Mammary epithelial cell (primary cell): ENCODE measurements at regions of chr14 and their contacts with region 1.

Region 1: GRCh38 chr14:103444837-103445524 is 59.8 kb downstream of the MARK3 start:
- DNase-seq: no peak
- H3K4me3 ChIP-seq: no peak overlapping the region
- H3K27ac ChIP-seq: no peak overlapping the region
- H3K4me1 ChIP-seq: no peaks in the 10 kb centered on the region
- H3K27me3 ChIP-seq: no peaks in the 10 kb centered on the region
- CTCF ChIP-seq: no peak

Region 2: DNA sequence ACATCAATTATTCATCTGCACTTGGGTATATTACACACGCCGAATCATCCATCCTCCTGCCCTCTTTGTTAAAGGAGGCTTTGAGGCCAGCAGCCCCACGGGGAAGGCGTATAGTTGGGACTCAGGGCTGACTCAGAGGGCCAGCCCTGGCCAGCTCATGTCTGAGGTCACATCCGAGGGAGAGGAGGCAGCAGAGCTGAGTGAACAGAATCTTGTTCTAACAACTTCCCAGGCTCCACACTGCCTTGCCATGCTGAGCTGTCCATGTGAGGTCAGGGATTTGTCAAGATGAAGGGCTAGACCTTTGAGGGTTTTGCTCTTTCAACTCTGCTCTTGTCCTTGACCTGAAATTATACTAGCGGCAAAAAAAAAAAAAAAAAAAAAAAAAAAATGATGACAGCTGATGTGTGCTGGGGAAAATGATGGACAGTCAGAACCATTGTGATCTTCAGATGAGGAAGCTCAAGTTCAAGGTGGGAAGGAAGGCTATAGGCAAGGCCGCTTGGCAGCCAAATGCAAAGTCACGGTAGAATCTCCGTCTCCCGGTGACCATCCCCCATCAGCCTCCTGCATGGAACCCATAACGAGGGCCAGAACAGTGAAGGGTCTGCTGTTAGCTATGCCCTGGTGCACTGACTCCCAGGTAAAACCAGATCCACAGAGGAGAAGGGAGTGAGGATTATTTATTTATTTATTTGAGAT is 72.2 kb before region 1 on chr14:
- CTCF ChIA-PET with region 1: no interaction called
- dilution Hi-C with region 1: no loop called
- in situ Hi-C with region 1: no loop called
- intact Hi-C with region 1: no loop called
- DNase-seq: peak; percentile 99
- H3K4me3 ChIP-seq: no peak overlapping the region
- H3K27ac ChIP-seq: peak overlapping the region; percentile 72
- H3K4me1 ChIP-seq: peaks cover 14% of the 10 kb centered on the region
- H3K27me3 ChIP-seq: no peaks in the 10 kb centered on the region
- CTCF ChIP-seq: no peak

Region 3: DNA sequence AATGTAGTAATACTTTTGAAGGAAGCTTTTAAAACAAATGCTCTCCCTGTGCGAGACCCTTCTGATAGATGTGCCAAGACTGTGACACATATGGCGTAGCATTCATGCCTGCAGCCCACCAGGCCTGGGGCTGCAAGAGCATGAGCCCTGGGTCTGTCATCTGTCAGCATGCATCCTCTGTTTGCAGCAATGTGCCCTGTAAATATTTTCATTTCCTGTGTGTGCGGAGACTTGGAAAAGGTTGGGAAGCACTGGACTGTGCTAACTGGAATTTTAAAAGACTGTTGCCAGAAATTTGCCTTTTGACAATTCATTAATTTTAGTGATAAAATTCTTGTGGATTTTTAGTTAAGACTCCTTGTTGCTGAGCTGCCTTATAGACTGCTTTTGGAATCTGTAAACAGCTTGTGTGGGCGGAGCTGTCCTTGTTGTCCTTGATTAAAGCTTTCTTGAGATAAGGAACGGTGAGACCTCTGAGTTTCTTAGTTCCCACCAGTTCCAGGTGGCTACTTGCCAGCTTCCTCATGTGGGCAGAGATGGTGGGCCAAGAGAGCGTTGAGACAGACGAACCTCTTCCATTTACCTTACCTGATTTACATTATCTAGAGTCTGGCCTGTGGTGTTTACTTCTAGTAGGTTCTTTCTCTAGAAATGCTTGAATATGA is 36.4 kb before region 1 on chr14:
- CTCF ChIA-PET with region 1: no interaction called
- dilution Hi-C with region 1: loop called (anchors 5 kb)
- in situ Hi-C with region 1: no loop called
- intact Hi-C with region 1: loop called (anchors 5 kb)
- DNase-seq: no peak
- H3K4me3 ChIP-seq: no peak overlapping the region
- H3K27ac ChIP-seq: no peak overlapping the region
- H3K4me1 ChIP-seq: peaks cover 1% of the 10 kb centered on the region
- H3K27me3 ChIP-seq: no peaks in the 10 kb centered on the region
- CTCF ChIP-seq: no peak

Region 4: GRCh38 chr14:103418481-103418818 is 26.5 kb before region 1 on chr14:
- CTCF ChIA-PET with region 1: no interaction called
- dilution Hi-C with region 1: no loop called
- in situ Hi-C with region 1: no loop called
- intact Hi-C with region 1: loop called (anchors 5 kb)
- DNase-seq: peak; percentile 50
- H3K4me3 ChIP-seq: no peak overlapping the region
- H3K27ac ChIP-seq: no peak overlapping the region
- H3K4me1 ChIP-seq: peaks cover 5% of the 10 kb centered on the region
- H3K27me3 ChIP-seq: no peaks in the 10 kb centered on the region
- CTCF ChIP-seq: no peak

Region 5: GRCh38 chr14:104405566-104406226 is 960.7 kb after region 1 on chr14:
- CTCF ChIA-PET with region 1: no interaction called
- dilution Hi-C with region 1: no loop called
- in situ Hi-C with region 1: no loop called
- intact Hi-C with region 1: no loop called
- DNase-seq: no peak
- H3K4me3 ChIP-seq: no peak overlapping the region
- H3K27ac ChIP-seq: no peak overlapping the region
- H3K4me1 ChIP-seq: no peaks in the 10 kb centered on the region
- H3K27me3 ChIP-seq: no peaks in the 10 kb centered on the region
- CTCF ChIP-seq: no peak